ENCODE measurements at regions of chr6 and their contacts with region 1.

Region 1: DNA sequence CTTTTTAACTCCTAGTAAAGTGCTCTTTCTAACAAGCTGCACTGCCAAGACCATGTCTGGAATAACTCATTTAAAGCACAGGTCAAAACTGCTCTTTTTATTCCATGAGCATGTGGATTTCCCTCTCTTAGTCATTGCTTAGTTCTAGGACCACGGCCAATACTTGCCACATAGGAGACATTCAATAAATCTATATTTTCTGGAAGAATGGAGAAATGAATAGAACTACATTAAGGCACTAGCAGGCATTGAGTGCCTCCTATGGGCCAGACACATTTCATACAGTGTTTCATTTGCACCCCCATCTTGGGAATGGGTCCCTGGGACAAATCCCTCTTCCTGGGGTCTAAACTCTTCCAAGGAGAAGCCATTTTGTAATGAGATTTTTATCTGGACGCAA is 552.8 kb upstream of the CITED2 start:
- DNase-seq: no peak
- H3K4me3 ChIP-seq: no peak overlapping the region
- H3K27ac ChIP-seq: no peak overlapping the region
- H3K4me1 ChIP-seq: peaks cover 0 to 17% of the 10 kb centered on the region in 2 donors
- H3K27me3 ChIP-seq: no peaks in the 10 kb centered on the region
- CTCF ChIP-seq: no peak

Region 2: GRCh38 chr6:139973669-139974344 is 46.6 kb after region 1 on chr6:
- intact Hi-C with region 1: loop called (anchors 5 kb)
- DNase-seq: no peak
- H3K4me3 ChIP-seq: no peak overlapping the region
- H3K27ac ChIP-seq: peak overlapping the region in 1 of 2 donors; percentile 37
- H3K4me1 ChIP-seq: peaks cover 0 to 18% of the 10 kb centered on the region in 2 donors
- H3K27me3 ChIP-seq: no peaks in the 10 kb centered on the region
- CTCF ChIP-seq: no peak